Activated CD4-positive, alpha-beta T cell treated with anti-CD3 and anti-CD28 coated beads for 36 hours (primary cell): ENCODE measurements at regions of chr6 and their contacts with region 1.

Region 1: DNA sequence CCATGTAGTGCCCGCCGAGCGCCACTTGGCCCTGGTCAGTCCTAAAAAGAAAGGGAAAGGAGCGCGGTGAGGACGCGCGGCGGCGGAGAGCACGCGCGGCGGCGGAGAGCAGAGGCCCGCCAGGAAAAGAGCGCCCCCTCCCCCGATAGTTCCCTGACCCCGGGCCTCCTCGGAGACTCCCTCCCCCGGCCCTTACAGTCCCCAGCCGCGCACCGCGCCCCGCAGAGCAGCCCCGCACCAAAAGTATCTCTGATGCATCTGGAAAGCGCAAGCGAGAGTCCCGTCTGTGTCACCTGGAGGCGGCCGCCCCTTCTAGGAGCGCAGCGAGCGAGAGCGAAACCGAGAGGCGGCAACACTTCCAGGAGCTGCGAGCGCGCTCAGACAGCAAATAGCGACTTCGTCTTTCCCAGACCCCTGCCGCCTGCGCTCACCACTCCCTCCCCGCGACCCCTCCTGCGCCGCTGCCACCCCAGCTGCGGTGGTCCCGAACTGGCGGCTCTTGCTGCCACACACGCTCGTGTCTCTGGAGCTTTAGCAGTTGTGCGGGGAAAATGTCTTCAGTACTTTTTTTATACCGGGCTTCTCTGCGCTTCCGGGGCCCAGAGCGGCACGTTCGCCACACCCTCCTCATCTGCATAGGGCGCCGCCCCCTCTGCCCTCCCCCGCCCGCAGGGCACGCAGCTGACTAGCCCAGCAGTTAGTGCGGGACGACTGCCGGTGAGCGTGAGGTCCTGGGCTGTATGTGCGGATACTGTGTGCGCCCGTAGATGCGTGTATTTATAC is at the start of gene TENT5A:
- DNase-seq: peak; percentile 90
- ATAC-seq: peak; percentile 81
- H3K4me3 Mint-ChIP-seq: peak within 1 kb of the TSS; percentile 77
- H3K27ac Mint-ChIP-seq: peak within 1 kb of the TSS; percentile 71
- H3K4me1 Mint-ChIP-seq: peaks cover 21% of the 10 kb centered on the region
- H3K27me3 Mint-ChIP-seq: peaks cover 14% of the 10 kb centered on the region
- total RNA-seq, gene TENT5A: 0.43 to 0.51 TPM

Region 2: GRCh38 chr6:79949233-79949632 is 1803.1 kb before region 1 on chr6:
- CTCF ChIA-PET with region 1: no interaction called
- POLR2A ChIA-PET with region 1: no interaction called
- intact Hi-C with region 1: loop called (anchors 2 kb)
- DNase-seq: peak; percentile 83
- ATAC-seq: peak; percentile 33
- H3K4me3 Mint-ChIP-seq: no peak overlapping the region
- H3K27ac Mint-ChIP-seq: no peak overlapping the region
- H3K4me1 Mint-ChIP-seq: peaks cover 29% of the 10 kb centered on the region
- H3K27me3 Mint-ChIP-seq: peaks cover 22% of the 10 kb centered on the region

Region 3: DNA sequence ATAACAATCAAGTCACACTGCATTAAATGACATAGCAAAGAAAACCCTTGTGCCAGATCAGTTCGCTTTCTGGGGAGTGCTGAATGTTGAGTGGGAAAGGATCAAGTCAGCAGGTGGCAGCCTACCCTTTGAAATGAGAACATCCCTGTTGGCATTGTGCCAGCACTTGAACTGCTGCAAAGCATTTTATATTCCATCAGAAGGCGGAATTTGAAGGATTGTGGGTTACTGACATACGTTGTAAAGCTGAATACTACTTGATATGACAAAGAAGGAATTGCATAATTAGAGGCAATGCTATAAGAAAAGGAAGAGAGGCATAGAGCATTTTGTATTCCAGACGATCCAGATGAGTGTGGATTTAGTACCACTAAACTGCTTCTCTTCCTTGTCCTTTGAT is 1619.3 kb before region 1 on chr6:
- CTCF ChIA-PET with region 1: no interaction called
- POLR2A ChIA-PET with region 1: no interaction called
- intact Hi-C with region 1: loop called in 1 of 2 experiments (anchors 10 kb)
- DNase-seq: peak; percentile 59
- ATAC-seq: no peak
- H3K4me3 Mint-ChIP-seq: no peak overlapping the region
- H3K27ac Mint-ChIP-seq: no peak overlapping the region
- H3K4me1 Mint-ChIP-seq: no peaks in the 10 kb centered on the region
- H3K27me3 Mint-ChIP-seq: no peaks in the 10 kb centered on the region

Region 4: DNA sequence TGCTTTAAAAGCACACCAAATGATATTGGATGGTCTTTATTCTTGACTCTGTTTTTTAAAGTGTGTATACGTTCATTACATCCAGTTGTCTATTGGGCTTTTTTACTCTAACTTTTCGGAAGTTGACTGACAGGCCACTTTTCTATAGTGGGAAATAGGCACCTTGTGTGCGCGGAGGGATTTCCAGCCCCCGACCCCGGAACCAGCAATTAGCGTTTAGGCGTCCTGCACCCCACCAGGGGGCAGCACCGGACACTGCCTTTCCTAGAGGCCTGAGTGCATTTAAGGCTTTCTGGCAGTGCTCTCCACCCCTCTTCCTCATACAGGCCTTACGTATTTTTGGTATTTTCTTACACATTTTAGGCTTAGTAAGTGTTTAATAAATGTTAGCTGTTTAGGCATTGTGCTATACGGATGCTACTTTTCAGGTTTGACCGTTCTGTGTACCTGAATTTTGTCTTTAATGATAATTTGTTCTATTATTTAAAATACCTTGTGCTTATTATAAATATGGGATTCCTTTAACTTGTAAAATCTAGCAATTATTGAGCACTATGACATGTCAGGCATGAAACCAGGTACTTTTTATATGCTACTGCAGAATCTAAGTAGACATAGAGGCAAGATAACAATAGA is 1414.0 kb before region 1 on chr6:
- CTCF ChIA-PET with region 1: no interaction called
- POLR2A ChIA-PET with region 1: no interaction called
- intact Hi-C with region 1: loop called (anchors 1 kb)
- DNase-seq: peak; percentile 83
- ATAC-seq: peak; percentile 66
- H3K4me3 Mint-ChIP-seq: no peak overlapping the region
- H3K27ac Mint-ChIP-seq: no peak overlapping the region
- H3K4me1 Mint-ChIP-seq: no peaks in the 10 kb centered on the region
- H3K27me3 Mint-ChIP-seq: no peaks in the 10 kb centered on the region

Region 5: DNA sequence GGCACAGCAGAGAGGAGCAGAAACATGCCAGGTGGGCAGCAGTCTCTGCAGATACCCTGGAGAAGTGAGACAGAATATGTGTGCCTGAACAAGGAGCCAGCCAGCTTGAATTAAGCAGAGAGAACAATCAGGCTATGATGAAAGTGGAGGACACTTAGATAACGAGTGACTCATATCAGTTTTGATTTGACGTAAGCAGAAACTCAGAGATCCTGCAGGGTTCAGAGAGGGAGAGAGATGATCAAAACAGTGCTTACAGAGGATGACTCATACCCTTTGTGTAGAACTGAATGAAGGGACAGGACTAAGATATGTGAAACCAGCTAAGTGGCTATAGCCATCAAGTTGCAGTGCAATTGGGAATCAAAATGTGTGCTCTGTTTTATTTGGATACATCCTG is 300.5 kb before region 1 on chr6:
- CTCF ChIA-PET with region 1: no interaction called
- POLR2A ChIA-PET with region 1: no interaction called
- intact Hi-C with region 1: loop called in 1 of 2 experiments (anchors 5 kb)
- DNase-seq: peak; percentile 5
- ATAC-seq: peak; percentile 100
- H3K4me3 Mint-ChIP-seq: no peak overlapping the region
- H3K27ac Mint-ChIP-seq: no peak overlapping the region
- H3K4me1 Mint-ChIP-seq: no peaks in the 10 kb centered on the region
- H3K27me3 Mint-ChIP-seq: no peaks in the 10 kb centered on the region

Region 6: GRCh38 chr6:81894788-81895271 is 142.5 kb after region 1 on chr6:
- CTCF ChIA-PET with region 1: no interaction called
- POLR2A ChIA-PET with region 1: no interaction called
- intact Hi-C with region 1: no loop called
- DNase-seq: no peak
- ATAC-seq: no peak
- H3K4me3 Mint-ChIP-seq: no peak overlapping the region
- H3K27ac Mint-ChIP-seq: no peak overlapping the region
- H3K4me1 Mint-ChIP-seq: no peaks in the 10 kb centered on the region
- H3K27me3 Mint-ChIP-seq: no peaks in the 10 kb centered on the region

Region 7: DNA sequence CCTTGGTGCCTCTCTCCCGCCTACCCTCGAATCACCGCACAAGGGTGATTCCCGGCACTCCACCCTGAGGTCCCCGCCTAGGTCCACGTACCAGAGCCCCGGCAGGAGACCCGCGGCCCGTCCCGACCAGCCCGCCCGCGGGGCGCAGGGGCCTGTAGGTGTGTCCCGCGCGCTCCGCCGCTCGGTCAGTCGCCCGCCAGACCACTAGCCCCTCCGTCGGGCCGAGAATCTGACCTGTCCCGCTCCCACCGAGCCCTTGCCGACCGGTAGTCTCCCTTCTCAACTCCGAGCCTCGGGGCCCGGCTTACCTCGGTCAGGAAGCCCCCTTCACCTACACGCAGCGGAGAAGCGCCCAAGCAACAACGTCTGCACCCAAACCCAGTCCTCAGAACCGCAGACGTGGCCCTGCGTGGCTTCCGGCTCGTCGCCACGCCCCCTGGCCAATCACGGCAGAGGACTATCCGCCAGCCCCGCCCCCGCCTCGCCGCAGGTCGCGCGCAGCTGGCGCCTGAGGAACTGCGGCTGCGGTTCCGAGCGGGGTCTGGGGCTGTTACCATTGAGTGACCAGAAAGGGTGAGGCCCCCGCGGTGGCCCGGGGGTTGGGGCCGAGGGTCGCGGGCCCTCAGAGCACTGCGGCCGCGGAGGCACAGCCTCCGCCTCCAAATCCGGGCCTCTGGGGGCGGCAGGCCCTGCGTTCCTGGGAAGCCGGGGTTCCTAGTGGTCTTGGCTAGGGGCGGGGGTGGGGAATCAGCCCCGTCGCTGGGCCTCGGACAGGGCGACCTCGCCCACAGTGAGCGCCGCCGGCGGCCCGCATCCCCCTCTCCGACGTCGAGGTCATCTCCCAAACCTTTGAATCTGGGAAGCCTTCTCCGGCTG is 1440.8 kb after region 1 on chr6 and contains the starts of genes PGM3 and RWDD2A:
- CTCF ChIA-PET with region 1: no interaction called
- POLR2A ChIA-PET with region 1: no interaction called
- intact Hi-C with region 1: loop called in 1 of 2 experiments (anchors 2 kb)
- DNase-seq: peak; percentile 93
- ATAC-seq: peak; percentile 99
- H3K4me3 Mint-ChIP-seq: peak within 1 kb of the TSS; percentile 95
- H3K27ac Mint-ChIP-seq: peak within 1 kb of the TSS; percentile 94
- H3K4me1 Mint-ChIP-seq: peaks cover 34% of the 10 kb centered on the region
- H3K27me3 Mint-ChIP-seq: no peaks in the 10 kb centered on the region
- total RNA-seq, gene PGM3: 12.6 to 19.6 TPM
- total RNA-seq, gene RWDD2A: 1.6 to 1.9 TPM